Left colon (tissue), 2 donors: ENCODE measurements at regions of chr3 and their contacts with region 1.

Region 1: DNA sequence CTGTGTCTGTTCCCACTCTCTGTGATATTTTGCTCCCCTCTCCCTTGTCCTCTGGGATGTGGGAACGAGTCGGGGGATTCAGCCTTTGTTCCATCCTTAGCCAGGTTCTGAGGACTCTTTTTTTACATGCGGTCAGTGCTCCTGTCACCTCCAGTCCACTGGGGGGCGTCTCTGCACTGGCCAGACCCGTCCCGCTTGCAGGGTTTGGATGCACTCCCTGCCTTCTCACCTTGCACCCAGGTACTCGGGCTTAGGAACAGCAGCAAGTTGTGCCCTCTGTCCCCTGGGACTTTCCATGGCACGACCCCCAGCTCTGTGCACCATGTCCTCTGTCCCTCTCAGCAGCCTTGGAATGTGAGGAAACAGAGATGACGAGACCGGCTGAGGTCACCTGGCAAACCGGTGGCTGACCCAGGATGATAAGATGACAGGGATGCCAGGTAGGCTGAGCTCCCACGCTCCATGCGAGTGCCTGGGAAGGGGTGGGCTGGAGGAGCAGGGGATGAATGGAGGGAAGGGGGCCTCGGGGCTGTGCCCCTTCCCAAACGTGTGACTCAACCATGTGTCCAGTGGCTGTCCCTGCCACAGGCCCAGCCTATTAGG is 27.3 kb upstream of the FGD5 start:
- DNase-seq: peak; percentile 53 to 78
- ATAC-seq: peak; percentile 92

Region 2: GRCh38 chr3:14646589-14647413 is 144.6 kb before region 1 on chr3:
- intact Hi-C with region 1: no loop called
- DNase-seq: no peak
- ATAC-seq: no peak

Region 3: DNA sequence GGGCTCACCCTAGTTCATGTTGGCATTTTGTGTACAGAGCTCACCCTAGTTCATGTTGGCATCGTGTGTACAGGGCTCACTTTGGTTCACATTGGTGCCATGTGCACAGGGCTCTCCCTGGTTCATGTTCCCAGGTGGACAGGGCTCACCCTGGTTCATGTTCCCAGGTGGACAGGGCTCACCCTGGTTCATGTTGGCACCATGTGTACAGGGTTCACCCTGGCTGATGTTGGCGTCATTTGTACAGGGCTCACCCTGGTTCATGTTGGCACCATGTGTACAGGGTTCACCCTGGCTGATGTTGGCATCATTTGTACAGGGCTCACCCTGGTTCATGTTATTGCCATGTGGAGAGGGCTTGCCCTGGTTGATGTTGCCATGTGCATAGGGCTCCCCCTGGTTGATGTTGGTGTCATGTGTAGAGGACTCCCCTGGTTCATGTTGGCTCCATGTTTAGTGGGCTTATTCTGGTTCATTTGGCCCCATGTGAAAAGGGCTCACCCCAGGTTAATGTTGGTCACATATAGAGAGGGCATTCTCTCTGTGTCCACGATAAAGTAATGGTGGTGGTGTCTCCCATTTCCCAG is 124.3 kb after region 1 on chr3:
- intact Hi-C with region 1: loop called (anchors 5 to 10 kb)
- DNase-seq: no peak
- ATAC-seq: peak; percentile 67